ENCODE measurements at regions of chr5 and their contacts with region 1.

Region 1: DNA sequence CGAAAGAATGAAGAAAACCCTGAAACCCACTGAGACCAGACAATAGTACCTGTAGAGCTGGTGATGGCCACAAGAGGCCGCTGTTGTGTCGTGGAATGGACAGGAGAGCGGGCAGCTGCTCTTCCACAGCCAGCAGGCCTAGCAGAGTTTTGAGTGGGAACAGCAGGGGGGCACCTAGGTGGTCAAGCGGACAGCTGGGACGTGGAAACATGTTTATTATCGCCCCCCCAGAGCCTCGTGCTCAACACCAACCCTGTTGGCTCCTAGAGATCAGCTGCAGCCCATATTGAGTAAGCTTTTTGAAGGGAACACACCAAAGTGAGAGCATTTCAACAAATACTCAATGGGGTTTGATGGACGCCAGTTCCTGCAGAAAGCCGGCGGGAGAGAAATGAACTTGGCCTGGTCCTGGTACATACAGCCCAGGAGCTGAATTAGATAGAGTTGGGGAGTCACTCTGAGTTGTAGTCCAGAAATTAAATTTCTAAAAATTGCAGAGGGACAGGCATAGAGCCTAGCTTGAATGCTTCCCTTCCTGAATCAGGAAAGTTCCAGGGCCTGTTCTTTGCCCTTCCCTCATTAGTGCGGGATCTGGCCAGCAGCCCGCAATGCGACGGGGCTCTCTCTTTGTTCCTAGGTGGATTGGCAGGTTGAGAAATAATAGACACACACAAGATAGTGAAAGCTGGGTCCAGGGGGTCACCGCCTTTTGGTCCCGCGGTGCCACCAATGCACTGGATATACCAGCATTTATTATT is 33.8 kb downstream of the MFAP3 start:
- DNase-seq: peak; percentile 87
- H3K4me3 Mint-ChIP-seq: no peak overlapping the region
- H3K27ac Mint-ChIP-seq: no peak overlapping the region
- H3K4me1 Mint-ChIP-seq: peaks cover 5% of the 10 kb centered on the region
- H3K27me3 Mint-ChIP-seq: no peaks in the 10 kb centered on the region
- CTCF ChIP-seq: peak; percentile 99

Region 2: DNA sequence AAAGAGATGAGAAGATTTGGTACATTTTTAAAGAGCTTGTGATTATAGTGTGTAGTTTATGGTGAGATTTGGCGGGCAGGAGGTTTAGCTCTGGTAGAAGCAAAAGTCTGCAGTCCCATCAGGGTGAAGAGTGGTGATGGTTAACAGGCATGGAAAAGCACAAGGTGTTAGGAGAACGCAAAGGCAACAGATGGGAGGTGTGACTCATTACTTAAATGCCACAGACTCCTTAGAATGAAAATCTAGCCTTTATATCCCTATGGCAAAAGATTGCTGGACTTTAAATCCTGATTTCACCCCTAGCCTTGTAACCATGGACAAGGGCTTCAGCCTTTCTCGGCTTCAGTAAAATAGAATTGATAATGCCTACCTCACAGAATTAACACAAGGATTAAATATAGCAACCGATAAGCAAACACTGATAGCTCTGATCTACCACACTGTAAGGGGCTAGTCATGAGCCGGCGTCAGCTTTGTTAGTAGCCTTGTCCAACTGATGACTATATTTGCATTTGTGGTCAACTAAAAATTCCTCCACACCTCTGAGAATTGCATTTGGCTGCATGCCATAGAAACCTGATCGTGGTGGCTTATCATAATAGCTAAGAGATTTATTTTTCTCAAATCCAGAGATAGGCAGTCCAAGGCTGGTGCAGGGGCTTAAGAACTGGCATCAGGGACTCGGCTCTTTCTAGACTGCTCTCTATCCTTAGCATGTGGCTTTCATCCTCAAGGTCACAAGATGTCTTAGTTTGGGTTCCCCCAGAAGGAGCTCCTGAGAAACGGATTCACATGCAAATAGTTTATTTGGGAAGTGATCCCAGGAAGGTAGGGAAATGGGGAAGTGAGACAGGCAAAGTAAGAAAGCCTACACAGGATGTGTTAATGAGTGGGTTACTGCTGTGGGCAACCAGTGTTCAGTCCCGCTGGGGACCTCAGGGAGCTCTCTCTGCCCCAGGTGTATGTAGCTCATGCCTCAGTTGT is 14.2 kb before region 1 on chr5:
- CTCF ChIA-PET with region 1: interaction called, 53 read pairs
- POLR2A ChIA-PET with region 1: no interaction called
- intact Hi-C with region 1: no loop called
- DNase-seq: peak; percentile 53
- H3K4me3 Mint-ChIP-seq: no peak overlapping the region
- H3K27ac Mint-ChIP-seq: no peak overlapping the region
- H3K4me1 Mint-ChIP-seq: peaks cover 7% of the 10 kb centered on the region
- H3K27me3 Mint-ChIP-seq: no peaks in the 10 kb centered on the region
- CTCF ChIP-seq: no peak

Region 3: DNA sequence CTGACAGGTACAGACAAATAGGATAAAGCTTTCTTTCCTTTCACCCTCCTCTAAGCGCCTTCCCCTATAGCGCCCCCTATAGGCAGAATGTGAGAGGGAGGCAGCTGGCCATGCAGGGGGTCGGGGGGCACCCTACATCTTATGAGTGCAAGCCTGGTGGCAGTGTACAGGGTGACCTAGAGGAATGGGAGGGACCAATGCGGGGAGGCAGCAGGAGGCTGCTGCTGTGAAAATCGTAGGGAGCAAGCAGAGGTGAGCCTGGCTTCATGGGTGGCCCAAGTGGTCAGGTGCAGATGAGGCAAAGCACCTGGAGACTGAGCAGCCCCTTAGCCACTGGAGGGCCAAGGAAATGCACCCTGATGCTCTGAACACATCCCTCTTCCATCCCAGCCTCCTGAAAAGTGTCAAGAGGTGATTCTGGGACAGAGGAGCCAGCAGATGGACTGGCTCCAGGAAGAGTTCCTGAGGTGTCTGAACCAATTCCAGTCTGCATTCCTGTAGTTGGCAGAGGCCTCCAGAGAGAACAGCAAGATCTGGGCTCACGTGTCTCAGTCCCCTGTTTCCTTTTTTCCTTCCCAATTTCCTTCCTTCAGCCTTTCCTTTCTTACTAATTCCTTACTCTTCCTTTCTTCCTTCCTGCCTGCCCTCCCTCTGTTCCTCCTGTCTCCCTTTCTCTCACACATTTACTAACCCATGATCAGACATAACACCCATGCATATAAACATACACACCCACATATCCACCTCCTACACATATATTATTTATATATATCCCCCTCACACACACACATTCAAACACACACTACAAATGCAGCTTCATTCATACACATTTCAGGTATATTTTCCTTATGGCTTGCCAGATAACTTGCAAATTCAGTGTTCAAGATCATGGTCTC is 85.1 kb after region 1 on chr5:
- CTCF ChIA-PET with region 1: interaction called, 21 read pairs
- POLR2A ChIA-PET with region 1: interaction called, 3 read pairs
- intact Hi-C with region 1: no loop called
- DNase-seq: no peak
- H3K4me3 Mint-ChIP-seq: no peak overlapping the region
- H3K27ac Mint-ChIP-seq: no peak overlapping the region
- H3K4me1 Mint-ChIP-seq: peaks cover 18% of the 10 kb centered on the region
- H3K27me3 Mint-ChIP-seq: peaks cover 8% of the 10 kb centered on the region
- CTCF ChIP-seq: peak; percentile 57

Region 4: GRCh38 chr5:154196955-154197652 is 124.5 kb after region 1 on chr5:
- CTCF ChIA-PET with region 1: interaction called, 38 read pairs
- POLR2A ChIA-PET with region 1: no interaction called
- intact Hi-C with region 1: no loop called
- DNase-seq: peak; percentile 35
- H3K4me3 Mint-ChIP-seq: no peak overlapping the region
- H3K27ac Mint-ChIP-seq: no peak overlapping the region
- H3K4me1 Mint-ChIP-seq: peaks cover 53% of the 10 kb centered on the region
- H3K27me3 Mint-ChIP-seq: no peaks in the 10 kb centered on the region
- CTCF ChIP-seq: peak; percentile 20

Region 5: GRCh38 chr5:154467655-154468354 is 395.2 kb after region 1 on chr5:
- CTCF ChIA-PET with region 1: interaction called, 37 read pairs
- POLR2A ChIA-PET with region 1: no interaction called
- intact Hi-C with region 1: loop called (anchors 2 kb)
- DNase-seq: peak; percentile 83
- H3K4me3 Mint-ChIP-seq: no peak overlapping the region
- H3K27ac Mint-ChIP-seq: no peak overlapping the region
- H3K4me1 Mint-ChIP-seq: peaks cover 14% of the 10 kb centered on the region
- H3K27me3 Mint-ChIP-seq: peaks cover 24% of the 10 kb centered on the region
- CTCF ChIP-seq: peak; percentile 96